Activated CD8-positive, alpha-beta T cell treated with anti-CD3 and anti-CD28 coated beads, Interleukin-2, amount 10 ng/mL, durations not matched to agents 7 days and 5 days (primary cell): ENCODE measurements at regions of chr4 and their contacts with region 1.

Region 1: DNA sequence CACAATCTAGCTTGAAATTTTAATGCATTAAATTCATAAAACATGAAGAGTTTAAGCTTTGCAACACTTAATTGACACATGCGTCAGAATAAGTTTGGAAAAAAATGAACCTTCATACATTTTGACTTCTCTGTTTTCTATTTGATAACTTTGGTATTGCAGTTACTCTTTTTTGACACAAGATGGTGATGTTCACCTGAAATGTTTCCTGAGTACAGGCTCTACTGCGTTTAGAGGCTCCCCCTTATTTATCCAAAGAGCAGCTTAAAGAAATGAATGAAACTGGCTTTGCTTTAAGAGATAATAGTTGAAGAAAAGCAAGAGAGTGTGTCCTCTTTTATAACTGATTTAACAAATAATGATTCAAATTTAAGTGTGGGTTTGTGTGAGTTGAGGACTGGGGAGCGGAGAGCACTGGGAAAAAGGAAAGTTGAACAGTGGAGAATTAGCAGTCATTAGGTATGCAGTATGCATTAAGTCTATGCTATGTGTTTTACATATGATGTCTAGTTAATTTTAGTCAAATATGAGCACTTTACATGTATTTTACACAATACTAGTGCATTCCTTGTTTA is 180.6 kb upstream of the NUDT6 start:
- DNase-seq: no peak
- ATAC-seq: peak; percentile 70
- H3K4me3 Mint-ChIP-seq: no peak overlapping the region
- H3K27ac Mint-ChIP-seq: no peak overlapping the region
- H3K4me1 Mint-ChIP-seq: no peaks in the 10 kb centered on the region
- H3K27me3 Mint-ChIP-seq: no peaks in the 10 kb centered on the region

Region 2: GRCh38 chr4:123284168-123284567 is 181.2 kb after region 1 on chr4:
- CTCF ChIA-PET with region 1: no interaction called
- POLR2A ChIA-PET with region 1: no interaction called
- DNase-seq: no peak
- ATAC-seq: no peak
- H3K4me3 Mint-ChIP-seq: no peak overlapping the region
- H3K27ac Mint-ChIP-seq: no peak overlapping the region
- H3K4me1 Mint-ChIP-seq: no peaks in the 10 kb centered on the region
- H3K27me3 Mint-ChIP-seq: no peaks in the 10 kb centered on the region

Region 3: DNA sequence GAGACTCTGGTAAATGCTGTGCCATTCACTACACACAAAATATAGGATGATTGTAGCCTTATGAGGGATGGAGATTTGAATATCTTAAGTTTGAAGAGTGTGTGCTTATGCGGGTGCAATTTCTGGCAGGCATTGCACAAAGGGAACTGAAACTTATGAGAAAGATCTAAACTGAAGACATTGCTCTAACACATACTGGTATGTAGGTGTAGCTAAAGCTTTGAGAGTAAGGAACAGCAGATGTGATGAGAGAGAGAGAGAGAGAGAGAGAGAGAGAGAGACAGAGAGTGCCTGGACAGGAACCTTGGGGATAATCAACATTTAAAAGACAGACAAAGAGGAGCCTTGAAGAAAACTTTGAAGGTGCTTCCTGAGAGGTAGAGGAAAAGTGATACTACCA is 673.3 kb after region 1 on chr4:
- CTCF ChIA-PET with region 1: interaction called, 10 read pairs
- POLR2A ChIA-PET with region 1: no interaction called
- DNase-seq: no peak
- ATAC-seq: no peak
- H3K4me3 Mint-ChIP-seq: no peak overlapping the region
- H3K27ac Mint-ChIP-seq: no peak overlapping the region
- H3K4me1 Mint-ChIP-seq: no peaks in the 10 kb centered on the region
- H3K27me3 Mint-ChIP-seq: peaks cover 10% of the 10 kb centered on the region